PC-3 (cell line): ENCODE measurements at regions of chr2 and their contacts with region 1.

Region 1: DNA sequence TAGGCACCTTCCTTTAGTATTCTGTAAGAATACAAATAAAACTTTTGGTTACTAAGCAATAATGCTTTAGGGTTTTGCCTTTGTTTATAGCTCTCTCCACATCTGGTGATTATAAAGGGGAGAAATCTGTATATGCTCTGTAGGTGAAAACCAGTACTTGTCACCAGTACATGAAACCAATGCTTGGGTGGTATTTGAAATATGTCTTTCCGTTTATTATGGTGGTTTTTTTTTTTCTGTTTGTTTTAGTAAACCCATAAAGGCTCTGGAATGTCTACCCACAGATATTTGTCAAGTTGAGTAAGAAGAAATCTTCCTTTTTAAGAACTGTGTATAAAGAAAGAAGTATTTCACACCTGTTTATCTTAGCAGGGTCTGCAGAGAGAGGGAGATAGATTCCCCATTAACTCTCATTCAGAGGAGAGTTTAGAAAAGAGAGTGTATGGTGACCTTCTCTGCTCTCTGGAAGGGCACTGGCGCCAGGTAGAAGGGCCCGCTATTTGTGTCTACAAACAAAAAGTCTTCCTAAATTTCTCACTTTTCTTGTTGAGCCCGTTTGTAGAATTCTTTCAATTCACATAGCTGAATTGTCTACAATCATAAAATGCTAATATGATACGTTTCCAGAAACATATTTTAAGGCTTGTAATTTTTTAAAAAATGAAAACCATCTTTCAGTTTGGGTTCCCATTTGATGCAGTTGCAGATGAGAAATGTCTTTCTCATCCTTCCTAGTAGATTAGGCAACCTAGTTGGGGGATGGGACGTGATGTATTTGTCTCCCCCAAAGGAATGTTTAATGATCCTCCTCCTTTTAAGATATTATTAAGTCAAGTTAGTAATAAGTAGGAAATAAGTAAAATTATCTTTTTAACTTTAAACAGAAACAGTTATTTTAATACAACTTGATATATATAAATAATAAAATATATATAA is 33.9 kb downstream of the MAP3K20 start:
- DNase-seq: peak; percentile 85
- ATAC-seq: peak; percentile 84
- H3K4me3 ChIP-seq: peak overlapping the region; percentile 39
- H3K27ac ChIP-seq: peak overlapping the region; percentile 44
- H3K4me1 ChIP-seq: peaks cover 18% of the 10 kb centered on the region
- H3K27me3 ChIP-seq: no peaks in the 10 kb centered on the region
- CTCF ChIP-seq: no peak

Region 2: DNA sequence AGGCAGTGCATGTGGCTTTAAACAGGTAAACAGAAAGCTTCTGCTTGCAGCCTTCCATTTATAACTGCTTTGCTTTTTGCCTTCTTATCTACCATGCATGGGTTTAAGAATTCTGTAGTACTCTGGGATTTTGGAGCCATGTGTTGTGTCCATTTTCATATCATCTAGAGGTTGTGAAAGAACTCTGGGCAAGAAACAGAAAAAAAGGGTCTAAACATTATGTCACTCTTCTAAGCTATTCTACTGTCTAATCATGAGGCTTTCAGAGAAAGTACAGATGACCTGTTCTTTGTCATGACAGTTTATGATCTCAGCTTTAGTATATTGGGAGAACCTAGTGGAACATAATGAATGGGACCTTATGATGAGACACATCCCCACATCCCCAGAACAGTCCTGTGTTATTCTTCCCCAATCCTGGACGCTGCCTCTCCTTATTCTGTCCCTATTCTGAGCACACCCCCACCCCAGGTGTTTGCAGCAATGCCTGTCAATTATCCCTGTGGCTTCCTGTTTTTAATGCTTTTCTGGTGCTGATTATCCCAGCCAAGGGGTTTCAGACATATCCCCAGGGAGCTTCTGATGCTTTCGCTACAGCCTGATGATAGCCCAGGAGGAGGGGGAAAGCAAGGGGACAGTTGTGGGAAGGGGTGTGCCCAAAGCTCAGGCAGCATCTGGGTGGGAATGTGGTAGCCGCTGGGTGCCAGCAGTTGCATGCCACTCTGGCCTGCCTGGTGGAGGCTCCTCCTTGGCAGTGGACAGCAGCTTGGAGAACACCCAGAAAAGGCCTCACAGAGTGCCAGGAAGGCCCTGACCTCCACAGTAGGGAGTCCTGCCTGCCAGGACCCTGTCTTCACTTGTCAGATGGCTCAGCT is 203.3 kb before region 1 on chr2:
- CTCF ChIA-PET with region 1: no interaction called
- POLR2A ChIA-PET with region 1: no interaction called
- intact Hi-C with region 1: no loop called
- DNase-seq: no peak
- ATAC-seq: no peak
- H3K4me3 ChIP-seq: no peak overlapping the region
- H3K27ac ChIP-seq: no peak overlapping the region
- H3K4me1 ChIP-seq: no peaks in the 10 kb centered on the region
- H3K27me3 ChIP-seq: no peaks in the 10 kb centered on the region
- CTCF ChIP-seq: no peak

Region 3: GRCh38 chr2:173048897-173049661 is 60.4 kb before region 1 on chr2:
- CTCF ChIA-PET with region 1: no interaction called
- POLR2A ChIA-PET with region 1: no interaction called
- intact Hi-C with region 1: loop called (anchors 1 kb)
- DNase-seq: peak; percentile 97
- ATAC-seq: peak; percentile 88
- H3K4me3 ChIP-seq: peak overlapping the region; percentile 31; the same call in 1 of the 2 replicates
- H3K27ac ChIP-seq: peak overlapping the region; percentile 92
- H3K4me1 ChIP-seq: peaks cover 68% of the 10 kb centered on the region
- H3K27me3 ChIP-seq: no peaks in the 10 kb centered on the region
- CTCF ChIP-seq: no peak

Region 4: DNA sequence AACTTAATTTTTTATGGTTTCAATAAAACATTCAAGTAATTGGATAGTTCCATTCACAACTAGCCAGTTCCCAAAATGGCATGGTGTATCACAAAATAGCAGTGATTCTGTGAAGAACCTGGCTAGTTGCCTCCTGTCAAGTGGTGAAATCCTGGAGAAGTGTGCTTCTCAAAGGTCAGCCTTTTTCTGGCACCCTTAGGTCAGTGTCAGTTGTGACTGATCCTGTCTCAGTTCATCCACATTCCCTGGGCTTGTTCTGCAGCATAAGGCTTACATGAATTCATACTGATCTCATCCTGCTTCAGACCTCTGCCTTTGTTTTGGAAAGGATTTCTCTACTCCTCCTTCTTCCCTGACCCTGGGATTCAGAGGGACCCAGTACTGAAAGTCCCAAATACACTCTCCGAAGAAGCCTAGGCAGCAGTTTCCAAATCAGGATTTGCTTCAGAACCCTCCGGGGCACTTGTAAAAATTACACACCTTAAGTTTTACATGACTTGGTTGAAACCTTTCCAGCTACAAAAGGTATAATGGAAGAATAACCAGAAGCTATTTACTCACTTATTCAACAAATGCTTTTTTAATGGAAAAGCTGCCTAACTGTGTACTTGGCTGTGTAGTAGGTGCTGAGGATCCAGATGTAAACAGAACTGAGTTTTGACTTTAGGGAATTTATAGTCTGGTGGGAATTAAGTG is 22.9 kb before region 1 on chr2:
- CTCF ChIA-PET with region 1: interaction called, 3 read pairs
- POLR2A ChIA-PET with region 1: no interaction called
- intact Hi-C with region 1: loop called (anchors 2 kb)
- DNase-seq: peak; percentile 58
- ATAC-seq: peak; percentile 80
- H3K4me3 ChIP-seq: peak overlapping the region; percentile 7; the same call in 1 of the 2 replicates
- H3K27ac ChIP-seq: peak overlapping the region; percentile 49
- H3K4me1 ChIP-seq: peaks cover 27% of the 10 kb centered on the region
- H3K27me3 ChIP-seq: no peaks in the 10 kb centered on the region
- CTCF ChIP-seq: no peak

Region 5: GRCh38 chr2:173134703-173135102 is 25.2 kb after region 1 on chr2:
- CTCF ChIA-PET with region 1: no interaction called
- POLR2A ChIA-PET with region 1: no interaction called
- intact Hi-C with region 1: no loop called
- DNase-seq: no peak
- ATAC-seq: no peak
- H3K4me3 ChIP-seq: no peak overlapping the region
- H3K27ac ChIP-seq: no peak overlapping the region
- H3K4me1 ChIP-seq: no peaks in the 10 kb centered on the region
- H3K27me3 ChIP-seq: no peaks in the 10 kb centered on the region
- CTCF ChIP-seq: no peak

Region 6: DNA sequence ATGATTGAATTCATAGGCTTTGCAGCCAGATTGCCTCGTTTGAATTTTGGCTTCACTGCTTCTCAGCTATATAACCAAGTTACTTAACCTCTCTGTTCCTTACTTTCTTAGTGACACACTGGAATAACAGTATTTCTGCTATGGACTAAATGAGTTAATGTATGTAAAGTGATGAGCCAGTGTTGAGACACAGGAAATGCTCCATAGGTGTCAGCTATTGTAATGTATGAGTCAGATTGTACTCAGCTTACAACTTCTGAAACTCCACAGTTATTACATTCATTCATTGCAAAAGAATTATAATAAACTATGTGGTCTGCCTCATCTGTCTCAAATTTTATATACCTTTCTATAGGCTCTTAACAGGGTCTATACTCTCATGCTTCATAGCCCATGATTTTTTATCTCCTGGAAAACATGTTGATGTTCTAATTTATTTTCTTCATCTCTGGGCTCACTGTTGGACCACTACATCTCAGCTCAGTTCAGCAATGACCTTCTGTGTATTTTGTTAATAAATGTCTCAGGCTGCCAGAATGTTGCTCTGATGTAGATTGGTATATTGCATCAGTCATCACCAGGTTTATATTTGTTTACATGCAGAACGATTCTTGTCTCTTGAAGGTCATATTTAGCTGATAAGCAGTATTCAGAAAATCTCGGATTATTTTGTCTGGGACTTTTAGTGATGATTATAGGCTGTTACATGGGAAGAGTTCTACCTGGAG is 42.3 kb after region 1 on chr2:
- CTCF ChIA-PET with region 1: no interaction called
- POLR2A ChIA-PET with region 1: no interaction called
- intact Hi-C with region 1: loop called (anchors 5 kb)
- DNase-seq: peak; percentile 94
- ATAC-seq: peak; percentile 85
- H3K4me3 ChIP-seq: peak overlapping the region; percentile 23; the same call in 1 of the 2 replicates
- H3K27ac ChIP-seq: peak overlapping the region; percentile 86
- H3K4me1 ChIP-seq: peaks cover 58% of the 10 kb centered on the region
- H3K27me3 ChIP-seq: no peaks in the 10 kb centered on the region
- CTCF ChIP-seq: no peak

Region 7: GRCh38 chr2:173343906-173344305 is 234.4 kb after region 1 on chr2:
- CTCF ChIA-PET with region 1: no interaction called
- POLR2A ChIA-PET with region 1: no interaction called
- intact Hi-C with region 1: no loop called
- DNase-seq: no peak
- ATAC-seq: no peak
- H3K4me3 ChIP-seq: no peak overlapping the region
- H3K27ac ChIP-seq: no peak overlapping the region
- H3K4me1 ChIP-seq: no peaks in the 10 kb centered on the region
- H3K27me3 ChIP-seq: no peaks in the 10 kb centered on the region
- CTCF ChIP-seq: no peak

Region 8: DNA sequence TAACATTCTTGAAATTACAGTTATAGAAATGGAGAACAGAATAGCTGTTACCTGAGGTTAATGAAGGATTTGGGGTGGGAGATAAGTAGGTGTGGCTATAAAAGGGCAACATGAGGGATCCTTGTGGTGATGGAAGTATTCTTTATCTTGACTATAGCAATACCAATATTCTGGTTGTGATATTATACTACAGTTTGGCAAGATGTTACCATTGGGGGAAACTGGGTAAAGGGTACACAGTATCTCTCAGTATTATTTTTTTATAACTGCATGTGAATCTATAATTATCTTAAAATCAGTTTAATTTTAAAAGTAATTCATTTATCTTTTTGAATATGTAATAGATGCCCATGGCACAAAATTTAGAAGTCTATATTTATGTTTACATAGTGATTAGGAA is 1294.1 kb after region 1 on chr2:
- CTCF ChIA-PET with region 1: no interaction called
- POLR2A ChIA-PET with region 1: no interaction called
- intact Hi-C with region 1: no loop called
- DNase-seq: no peak
- ATAC-seq: no peak
- H3K4me3 ChIP-seq: no peak overlapping the region
- H3K27ac ChIP-seq: no peak overlapping the region
- H3K4me1 ChIP-seq: no peaks in the 10 kb centered on the region
- H3K27me3 ChIP-seq: no peaks in the 10 kb centered on the region
- CTCF ChIP-seq: no peak